GM12878 (cell line): ENCODE measurements at regions of chr20 and their contacts with region 1.

Region 1: GRCh38 chr20:33211817-33212424 is 5.2 kb upstream of the BPIFA3 start:
- DNase-seq: no peak
- ATAC-seq: peak; percentile 72
- H3K4me3 ChIP-seq: no peak overlapping the region
- H3K27ac ChIP-seq: no peak overlapping the region
- H3K4me1 ChIP-seq: no peaks in the 10 kb centered on the region
- H3K27me3 ChIP-seq: peaks cover 0 to under 1% of the 10 kb centered on the region in 2 experiments; a peak in 2 of 4 replicates
- CTCF ChIP-seq: peak; percentile 54 to 58 (median 55)
- EP300 ChIP-seq: no peak
- POLR2A ChIP-seq: no peak
- RAD21 ChIP-seq: peak; percentile 62

Region 2: DNA sequence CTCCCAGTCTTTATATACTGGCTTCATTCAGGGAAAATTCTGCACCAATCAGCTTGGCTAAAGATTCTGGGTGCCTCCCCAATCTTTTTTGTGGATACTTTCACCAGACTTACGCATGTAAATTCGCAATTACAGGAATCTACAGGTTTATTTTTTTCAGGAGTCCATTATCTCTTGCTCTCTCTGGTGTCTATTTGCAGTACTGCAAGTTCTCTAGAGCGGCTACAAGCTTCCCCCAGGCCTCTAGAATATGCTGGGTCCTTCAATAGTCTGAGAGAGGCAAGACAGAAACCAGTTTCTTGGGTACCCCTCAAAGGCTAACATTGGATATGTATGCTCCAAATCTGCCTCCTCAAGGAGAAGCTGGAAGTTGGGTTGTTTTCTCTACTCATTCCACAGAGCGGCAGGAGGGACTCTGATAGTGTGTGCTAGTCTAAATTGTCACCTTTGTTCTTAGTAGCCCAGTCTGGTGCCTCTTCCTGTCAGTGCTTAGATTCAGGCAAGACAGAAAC is 266.2 kb before region 1 on chr20:
- CTCF ChIA-PET with region 1: no interaction called
- POLR2A ChIA-PET with region 1: no interaction called
- RAD21 ChIA-PET with region 1: no interaction called
- SMC1A ChIA-PET with region 1: no interaction called
- in situ Hi-C with region 1: no loop called
- intact Hi-C with region 1: no loop called
- DNase-seq: no peak
- ATAC-seq: peak; percentile 82
- H3K4me3 ChIP-seq: no peak overlapping the region
- H3K27ac ChIP-seq: no peak overlapping the region
- H3K4me1 ChIP-seq: no peaks in the 10 kb centered on the region
- H3K27me3 ChIP-seq: no peaks in the 10 kb centered on the region
- CTCF ChIP-seq: peak; percentile 41 to 61 (median 46)
- EP300 ChIP-seq: no peak
- POLR2A ChIP-seq: no peak
- RAD21 ChIP-seq: peak; percentile 19; the same call in 1 of the 2 replicates

Region 3: GRCh38 chr20:33097001-33097400 is 114.9 kb before region 1 on chr20:
- CTCF ChIA-PET with region 1: interaction called, 4 read pairs
- POLR2A ChIA-PET with region 1: no interaction called
- RAD21 ChIA-PET with region 1: no interaction called
- SMC1A ChIA-PET with region 1: no interaction called
- in situ Hi-C with region 1: no loop called
- intact Hi-C with region 1: loop called (anchors 2 kb)
- DNase-seq: no peak
- ATAC-seq: no peak
- H3K4me3 ChIP-seq: no peak overlapping the region
- H3K27ac ChIP-seq: no peak overlapping the region
- H3K4me1 ChIP-seq: no peaks in the 10 kb centered on the region
- H3K27me3 ChIP-seq: no peaks in the 10 kb centered on the region
- CTCF ChIP-seq: no peak
- EP300 ChIP-seq: no peak
- POLR2A ChIP-seq: no peak
- RAD21 ChIP-seq: no peak

Region 4: DNA sequence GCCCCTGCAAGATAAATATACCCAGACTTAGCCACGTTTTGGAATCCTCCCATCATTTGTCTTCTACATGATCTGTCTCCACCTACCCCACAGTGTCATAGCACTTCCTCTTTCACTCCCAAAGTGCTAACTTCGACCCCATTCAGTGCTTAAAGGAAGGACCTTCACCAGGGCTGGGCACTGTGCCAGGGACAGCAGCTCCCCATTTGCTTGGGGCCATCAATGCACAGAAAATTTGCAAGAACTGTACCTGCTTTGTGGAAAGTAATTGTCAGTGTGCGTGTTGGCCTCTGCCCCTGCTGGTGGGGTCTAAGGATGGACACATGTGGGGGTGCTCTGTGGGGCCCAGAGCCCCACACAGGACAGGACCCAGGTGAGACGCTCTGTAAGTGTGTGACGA is 49.2 kb before region 1 on chr20:
- CTCF ChIA-PET with region 1: no interaction called
- POLR2A ChIA-PET with region 1: no interaction called
- RAD21 ChIA-PET with region 1: no interaction called
- SMC1A ChIA-PET with region 1: no interaction called
- in situ Hi-C with region 1: no loop called
- intact Hi-C with region 1: loop called (anchors 5 kb)
- DNase-seq: no peak
- ATAC-seq: no peak
- H3K4me3 ChIP-seq: no peak overlapping the region
- H3K27ac ChIP-seq: no peak overlapping the region
- H3K4me1 ChIP-seq: no peaks in the 10 kb centered on the region
- H3K27me3 ChIP-seq: 0 out of 4 replicates have a peak, but pooled peaks cover 0 to 2% of the 10 kb centered on the region in 2 experiments
- CTCF ChIP-seq: no peak
- EP300 ChIP-seq: no peak
- POLR2A ChIP-seq: no peak
- RAD21 ChIP-seq: no peak

Region 5: DNA sequence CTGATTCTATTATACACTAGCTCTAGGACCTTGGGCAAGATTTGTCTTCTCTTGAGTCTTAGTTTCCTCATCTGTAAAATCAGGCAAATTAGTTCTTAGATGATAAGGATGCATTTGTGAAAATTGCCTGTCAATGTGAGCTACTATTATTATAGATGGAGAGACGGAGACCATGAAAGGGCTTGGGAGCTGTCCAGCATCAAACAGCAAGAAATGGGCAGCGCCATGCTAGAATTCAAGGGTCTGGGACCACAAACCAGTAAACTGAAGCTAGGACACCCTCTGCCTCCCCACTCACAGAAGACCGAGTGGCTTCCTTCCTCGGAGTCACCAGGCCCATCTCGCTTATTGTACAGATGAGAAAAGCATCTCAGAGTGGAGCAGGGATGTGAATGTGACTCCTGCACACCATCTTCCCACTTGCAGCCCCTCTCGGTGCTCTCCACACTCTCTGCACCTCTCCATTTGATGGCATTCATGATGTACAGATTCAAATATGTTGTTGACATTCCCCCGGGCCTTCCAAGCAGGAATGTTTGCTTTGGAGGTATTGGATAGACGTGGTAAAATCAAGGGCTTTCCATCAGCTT is 18.9 kb before region 1 on chr20:
- CTCF ChIA-PET with region 1: no interaction called
- POLR2A ChIA-PET with region 1: no interaction called
- RAD21 ChIA-PET with region 1: no interaction called
- SMC1A ChIA-PET with region 1: no interaction called
- in situ Hi-C with region 1: no loop called
- intact Hi-C with region 1: no loop called
- DNase-seq: no peak
- ATAC-seq: no peak
- H3K4me3 ChIP-seq: no peak overlapping the region
- H3K27ac ChIP-seq: no peak overlapping the region
- H3K4me1 ChIP-seq: no peaks in the 10 kb centered on the region
- H3K27me3 ChIP-seq: no peaks in the 10 kb centered on the region; a peak in 2 of 4 replicates
- CTCF ChIP-seq: no peak
- EP300 ChIP-seq: no peak
- POLR2A ChIP-seq: no peak
- RAD21 ChIP-seq: no peak

Region 6: DNA sequence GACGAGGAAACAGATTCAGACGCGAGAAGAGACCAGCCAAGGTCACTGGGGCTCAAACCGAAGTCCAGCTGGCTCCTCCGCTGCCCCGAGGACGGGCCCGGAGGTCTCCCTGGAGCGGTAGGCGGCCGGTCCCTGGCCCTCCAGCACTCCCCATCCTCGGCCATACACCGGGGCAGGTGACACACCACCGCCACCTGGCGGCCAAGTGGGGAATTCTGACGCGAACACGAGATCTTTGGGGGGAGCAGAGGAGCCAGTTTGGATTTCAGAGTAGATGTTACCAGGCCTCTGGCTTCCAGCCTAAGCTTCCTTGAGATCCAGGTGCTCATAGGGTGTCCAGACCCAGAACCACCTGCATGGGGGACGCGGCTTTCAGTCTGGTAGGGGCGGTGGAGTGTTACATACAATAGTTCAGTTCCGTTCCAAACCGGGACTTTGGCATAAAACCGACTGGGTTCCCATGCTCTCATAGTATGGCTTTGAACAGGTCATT is 87.2 kb after region 1 on chr20:
- CTCF ChIA-PET with region 1: no interaction called
- POLR2A ChIA-PET with region 1: no interaction called
- RAD21 ChIA-PET with region 1: no interaction called
- SMC1A ChIA-PET with region 1: no interaction called
- in situ Hi-C with region 1: no loop called
- intact Hi-C with region 1: loop called (anchors 5 kb)
- DNase-seq: no peak
- ATAC-seq: peak; percentile 97
- H3K4me3 ChIP-seq: no peak overlapping the region
- H3K27ac ChIP-seq: no peak overlapping the region
- H3K4me1 ChIP-seq: no peaks in the 10 kb centered on the region
- H3K27me3 ChIP-seq: peaks cover 0 to 2% of the 10 kb centered on the region in 2 experiments; a peak in 2 of 4 replicates
- CTCF ChIP-seq: peak; percentile 85 to 94 (median 91)
- EP300 ChIP-seq: no peak
- POLR2A ChIP-seq: no peak
- RAD21 ChIP-seq: peak; percentile 64

Region 7: DNA sequence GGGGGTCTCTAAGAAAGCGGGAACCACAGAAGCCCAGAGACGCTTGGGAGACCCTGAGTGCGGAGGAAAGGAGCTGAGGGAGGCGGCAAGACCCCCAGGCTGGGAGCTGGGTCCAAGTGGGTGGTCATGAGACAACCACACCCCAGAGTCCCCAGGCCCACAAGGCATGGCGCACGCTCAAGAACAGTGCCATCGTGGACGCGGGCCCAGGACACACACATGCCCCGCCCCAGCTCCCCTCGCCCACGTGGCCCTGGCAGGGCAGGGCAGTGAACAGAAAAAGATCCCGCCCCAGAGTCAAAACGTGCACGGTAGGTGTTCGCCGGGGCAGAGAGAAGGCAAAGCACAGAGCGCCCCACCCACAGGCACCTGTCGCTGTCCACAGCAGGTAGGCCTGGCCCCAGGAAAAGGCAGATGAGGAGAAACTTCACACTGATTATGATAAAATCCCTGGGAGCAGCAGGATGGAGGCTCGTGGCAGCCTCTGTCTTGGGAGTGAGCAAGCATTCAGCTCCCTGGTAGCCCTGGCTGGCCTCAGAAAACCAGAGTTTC is 121.1 kb after region 1 on chr20:
- CTCF ChIA-PET with region 1: no interaction called
- POLR2A ChIA-PET with region 1: no interaction called
- RAD21 ChIA-PET with region 1: no interaction called
- SMC1A ChIA-PET with region 1: no interaction called
- in situ Hi-C with region 1: no loop called
- intact Hi-C with region 1: no loop called
- DNase-seq: no peak
- ATAC-seq: no peak
- H3K4me3 ChIP-seq: no peak overlapping the region
- H3K27ac ChIP-seq: no peak overlapping the region
- H3K4me1 ChIP-seq: peaks cover 9% of the 10 kb centered on the region
- H3K27me3 ChIP-seq: no peaks in the 10 kb centered on the region; a peak in 3 of 4 replicates
- CTCF ChIP-seq: no peak
- EP300 ChIP-seq: no peak
- POLR2A ChIP-seq: no peak
- RAD21 ChIP-seq: no peak

Region 8: GRCh38 chr20:33862709-33863403 is 650.9 kb after region 1 on chr20:
- CTCF ChIA-PET with region 1: no interaction called
- POLR2A ChIA-PET with region 1: no interaction called
- RAD21 ChIA-PET with region 1: no interaction called
- SMC1A ChIA-PET with region 1: no interaction called
- in situ Hi-C with region 1: no loop called
- intact Hi-C with region 1: no loop called
- DNase-seq: no peak
- ATAC-seq: peak; percentile 95
- H3K4me3 ChIP-seq: no peak overlapping the region
- H3K27ac ChIP-seq: peak overlapping the region; percentile 35; the same call in 1 of the 2 replicates
- H3K4me1 ChIP-seq: peaks cover 28% of the 10 kb centered on the region
- H3K27me3 ChIP-seq: no peaks in the 10 kb centered on the region
- CTCF ChIP-seq: peak; percentile 49 to 81 (median 70)
- EP300 ChIP-seq: no peak
- POLR2A ChIP-seq: no peak
- RAD21 ChIP-seq: peak; percentile 85